ENCODE measurements at regions of chr12 and their contacts with region 1.

Region 1: GRCh38 chr12:97308576-97309198 is 153.9 kb upstream of the RMST start:
- DNase-seq: peak; percentile 36
- H3K4me3 ChIP-seq: no peak overlapping the region
- H3K27ac ChIP-seq: no peak overlapping the region
- H3K4me1 ChIP-seq: no peaks in the 10 kb centered on the region
- H3K27me3 ChIP-seq: 0 out of 2 replicates have a peak, but pooled peaks cover 4% of the 10 kb centered on the region

Region 2: GRCh38 chr12:96578526-96579125 is 730.1 kb before region 1 on chr12:
- in situ Hi-C with region 1: loop called (anchors 25 kb)
- DNase-seq: peak; percentile 80
- H3K4me3 ChIP-seq: peak overlapping the region; percentile 24; the same call in 1 of the 2 replicates
- H3K27ac ChIP-seq: no peak overlapping the region
- H3K4me1 ChIP-seq: no peaks in the 10 kb centered on the region
- H3K27me3 ChIP-seq: no peaks in the 10 kb centered on the region

Region 3: DNA sequence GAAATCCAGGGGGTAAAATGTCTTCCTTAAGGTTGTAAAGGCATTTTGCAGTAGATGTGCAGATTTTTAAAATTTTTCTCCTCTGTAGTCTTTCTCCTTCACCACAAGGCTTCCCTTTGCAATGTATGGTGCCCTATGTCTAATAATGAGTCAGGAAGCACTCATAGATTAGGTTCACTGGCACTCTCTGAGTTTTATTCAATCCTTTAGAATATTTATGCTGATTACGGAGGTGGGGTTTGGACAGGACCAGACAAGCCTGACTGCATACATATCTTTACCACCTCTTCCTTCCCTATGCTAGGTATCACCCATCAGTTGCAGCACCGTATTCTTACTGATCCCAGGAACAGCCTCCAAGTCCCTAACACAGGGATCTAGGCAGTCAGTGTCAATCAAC is 302.1 kb before region 1 on chr12:
- in situ Hi-C with region 1: loop called (anchors 10 kb)
- DNase-seq: no peak
- H3K4me3 ChIP-seq: no peak overlapping the region
- H3K27ac ChIP-seq: no peak overlapping the region
- H3K4me1 ChIP-seq: no peaks in the 10 kb centered on the region
- H3K27me3 ChIP-seq: peaks cover 6% of the 10 kb centered on the region

Region 4: GRCh38 chr12:98373025-98373554 is 1064.4 kb after region 1 on chr12:
- in situ Hi-C with region 1: no loop called
- DNase-seq: peak; percentile 66
- H3K4me3 ChIP-seq: no peak overlapping the region
- H3K27ac ChIP-seq: no peak overlapping the region
- H3K4me1 ChIP-seq: no peaks in the 10 kb centered on the region
- H3K27me3 ChIP-seq: peaks cover 25% of the 10 kb centered on the region